ENCODE measurements at regions of chr10 and their contacts with region 1.

Region 1: GRCh38 chr10:17599089-17599488 is 18.1 kb downstream of the HACD1 start:
- DNase-seq: peak; percentile 63
- H3K4me3 ChIP-seq: no peak overlapping the region
- H3K27ac ChIP-seq: no peak overlapping the region
- H3K4me1 ChIP-seq: no peaks in the 10 kb centered on the region
- H3K27me3 ChIP-seq: no peaks in the 10 kb centered on the region
- CTCF ChIP-seq: peak; percentile 43 to 44
- POLR2A ChIP-seq: no peak

Region 2: DNA sequence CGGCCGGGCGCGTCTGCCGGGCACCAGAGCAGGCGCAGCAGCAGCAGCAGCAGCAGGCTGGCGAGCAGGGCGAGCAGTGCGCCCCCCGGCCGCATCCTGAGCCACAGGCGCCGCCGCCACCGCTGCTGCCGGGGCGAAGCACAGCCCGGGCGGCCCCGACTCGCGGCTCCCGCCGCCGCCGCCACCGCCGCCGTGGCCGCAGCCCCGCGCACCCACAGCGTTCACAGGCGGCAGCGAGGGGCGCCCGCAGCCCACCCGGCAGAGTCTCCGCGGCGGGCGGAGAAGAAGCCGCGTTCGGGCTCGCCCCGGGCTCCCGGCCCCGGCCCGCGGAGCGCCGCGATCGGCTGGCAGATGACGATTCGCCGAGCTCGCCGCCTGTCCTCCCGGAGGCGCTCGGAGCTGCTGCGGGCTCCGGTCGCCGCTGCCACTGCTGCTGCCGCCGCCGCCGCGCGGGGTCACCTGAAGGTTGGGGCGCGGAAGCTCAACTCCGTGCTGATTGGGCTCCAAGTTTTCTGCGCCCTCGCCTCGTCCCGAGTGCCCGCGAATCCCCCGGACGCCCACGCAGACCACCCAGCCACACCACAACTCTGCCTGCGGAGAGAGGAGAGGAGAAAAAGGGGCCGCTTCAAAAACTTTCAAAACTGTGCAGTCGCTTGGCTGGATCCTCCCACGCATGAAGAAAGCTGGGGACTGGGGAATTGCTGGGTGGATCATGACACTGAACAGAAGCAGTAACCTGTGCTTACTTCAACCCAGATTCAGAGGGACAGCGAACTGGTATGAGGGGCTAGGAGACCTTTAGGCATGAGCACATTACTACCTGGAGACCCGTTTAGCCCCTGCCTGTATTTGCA is 144.7 kb before region 1 on chr10 and contains the start of gene ST8SIA6:
- CTCF ChIA-PET with region 1: interaction called, 6 read pairs
- POLR2A ChIA-PET with region 1: no interaction called
- dilution Hi-C with region 1: no loop called
- intact Hi-C with region 1: loop called (anchors 1 kb)
- DNase-seq: peak; percentile 66
- H3K4me3 ChIP-seq: peak within 1 kb of the TSS; percentile 37 to 69 (median 55)
- H3K27ac ChIP-seq: no peak within 1 kb of the TSS
- H3K4me1 ChIP-seq: peaks cover 9% of the 10 kb centered on the region
- H3K27me3 ChIP-seq: no peaks in the 10 kb centered on the region
- CTCF ChIP-seq: no peak
- POLR2A ChIP-seq: no peak
- total RNA-seq, gene ST8SIA6: 0.35 and 0.51 TPM in 2 replicates

Region 3: DNA sequence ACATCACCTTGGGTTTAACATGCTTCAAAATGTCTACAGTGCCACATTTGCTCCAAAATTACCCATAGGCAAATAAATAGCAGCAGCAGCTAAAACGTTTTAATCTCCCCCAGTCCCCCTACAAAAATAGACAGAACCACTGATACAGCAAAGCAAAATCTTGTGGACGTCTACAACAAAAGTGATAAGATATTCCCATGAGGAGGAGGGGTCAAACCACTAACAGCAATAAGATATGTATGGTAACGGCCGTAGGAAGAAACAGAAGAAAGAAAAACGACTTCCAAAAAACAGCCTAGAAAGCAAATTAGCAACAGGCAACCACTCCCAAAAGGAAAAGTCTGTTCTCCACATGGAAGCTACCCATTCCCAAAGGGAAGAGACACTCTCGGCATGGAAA is 110.2 kb before region 1 on chr10:
- CTCF ChIA-PET with region 1: no interaction called
- POLR2A ChIA-PET with region 1: no interaction called
- dilution Hi-C with region 1: no loop called
- intact Hi-C with region 1: no loop called
- DNase-seq: no peak
- H3K4me3 ChIP-seq: no peak overlapping the region
- H3K27ac ChIP-seq: no peak overlapping the region
- H3K4me1 ChIP-seq: no peaks in the 10 kb centered on the region
- H3K27me3 ChIP-seq: no peaks in the 10 kb centered on the region
- CTCF ChIP-seq: no peak
- POLR2A ChIP-seq: no peak

Region 4: DNA sequence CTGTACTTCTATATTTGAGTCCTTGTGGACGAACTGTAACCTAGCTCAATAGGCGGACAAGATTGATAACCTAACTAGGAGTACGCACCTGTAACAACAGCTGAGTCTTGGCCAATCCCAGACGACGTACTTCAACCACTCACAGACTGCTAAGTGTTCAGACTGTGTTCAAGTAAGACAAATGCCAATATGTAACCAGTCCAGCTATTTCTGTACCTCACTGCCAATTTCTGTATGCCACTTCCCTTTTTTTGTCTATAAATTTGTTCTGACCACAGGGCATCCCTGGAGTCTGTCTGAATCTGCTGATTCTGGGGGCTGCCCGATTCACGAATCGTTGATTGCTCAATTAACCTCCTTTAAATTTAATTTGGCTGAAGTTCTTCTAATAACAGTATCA is 14.1 kb before region 1 on chr10:
- CTCF ChIA-PET with region 1: interaction called, 7 read pairs
- POLR2A ChIA-PET with region 1: interaction called, 10 read pairs
- dilution Hi-C with region 1: no loop called
- intact Hi-C with region 1: no loop called
- DNase-seq: no peak
- H3K4me3 ChIP-seq: no peak overlapping the region
- H3K27ac ChIP-seq: no peak overlapping the region
- H3K4me1 ChIP-seq: peaks cover 7% of the 10 kb centered on the region
- H3K27me3 ChIP-seq: no peaks in the 10 kb centered on the region
- CTCF ChIP-seq: no peak
- POLR2A ChIP-seq: no peak

Region 5: DNA sequence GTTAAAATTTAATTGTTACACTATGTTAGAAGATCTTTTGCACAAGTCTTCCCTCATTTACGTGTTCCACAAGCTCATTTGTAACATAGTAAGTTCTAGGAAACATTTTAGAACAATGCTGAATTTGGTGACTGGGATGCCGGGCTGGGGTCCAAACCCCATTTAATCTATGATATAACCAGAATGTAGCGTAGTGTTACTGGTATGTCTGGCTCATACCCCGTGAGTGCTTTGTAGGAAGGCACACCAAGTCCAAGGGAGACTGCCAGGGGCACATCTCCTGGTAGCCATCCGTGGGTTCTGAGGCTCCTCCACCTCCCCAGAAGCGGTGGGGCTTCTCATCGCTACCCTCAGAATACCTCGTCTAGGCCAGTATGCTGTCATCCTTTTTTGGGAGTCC is 131.6 kb after region 1 on chr10:
- CTCF ChIA-PET with region 1: no interaction called
- POLR2A ChIA-PET with region 1: no interaction called
- dilution Hi-C with region 1: no loop called
- intact Hi-C with region 1: no loop called
- DNase-seq: no peak
- H3K4me3 ChIP-seq: no peak overlapping the region
- H3K27ac ChIP-seq: no peak overlapping the region
- H3K4me1 ChIP-seq: peaks cover 9% of the 10 kb centered on the region
- H3K27me3 ChIP-seq: no peaks in the 10 kb centered on the region
- CTCF ChIP-seq: no peak
- POLR2A ChIP-seq: no peak

Measured in endothelial cell of umbilical vein (primary cell).